ENCODE measurements at regions of chr3 and their contacts with region 1.

Region 1: GRCh38 chr3:119453818-119454217 is 9.6 kb downstream of the TMEM39A start:
- DNase-seq: no peak
- ATAC-seq: no peak
- H3K4me3 ChIP-seq: no peak overlapping the region
- H3K4me3 Mint-ChIP-seq: no peak overlapping the region
- H3K27ac ChIP-seq: no peak overlapping the region
- H3K27ac Mint-ChIP-seq: no peak overlapping the region
- H3K4me1 ChIP-seq: no peaks in the 10 kb centered on the region
- H3K4me1 Mint-ChIP-seq: peaks cover 22% of the 10 kb centered on the region
- H3K27me3 ChIP-seq: no peaks in the 10 kb centered on the region
- H3K27me3 Mint-ChIP-seq: no peaks in the 10 kb centered on the region
- CTCF ChIP-seq: no peak

Region 2: DNA sequence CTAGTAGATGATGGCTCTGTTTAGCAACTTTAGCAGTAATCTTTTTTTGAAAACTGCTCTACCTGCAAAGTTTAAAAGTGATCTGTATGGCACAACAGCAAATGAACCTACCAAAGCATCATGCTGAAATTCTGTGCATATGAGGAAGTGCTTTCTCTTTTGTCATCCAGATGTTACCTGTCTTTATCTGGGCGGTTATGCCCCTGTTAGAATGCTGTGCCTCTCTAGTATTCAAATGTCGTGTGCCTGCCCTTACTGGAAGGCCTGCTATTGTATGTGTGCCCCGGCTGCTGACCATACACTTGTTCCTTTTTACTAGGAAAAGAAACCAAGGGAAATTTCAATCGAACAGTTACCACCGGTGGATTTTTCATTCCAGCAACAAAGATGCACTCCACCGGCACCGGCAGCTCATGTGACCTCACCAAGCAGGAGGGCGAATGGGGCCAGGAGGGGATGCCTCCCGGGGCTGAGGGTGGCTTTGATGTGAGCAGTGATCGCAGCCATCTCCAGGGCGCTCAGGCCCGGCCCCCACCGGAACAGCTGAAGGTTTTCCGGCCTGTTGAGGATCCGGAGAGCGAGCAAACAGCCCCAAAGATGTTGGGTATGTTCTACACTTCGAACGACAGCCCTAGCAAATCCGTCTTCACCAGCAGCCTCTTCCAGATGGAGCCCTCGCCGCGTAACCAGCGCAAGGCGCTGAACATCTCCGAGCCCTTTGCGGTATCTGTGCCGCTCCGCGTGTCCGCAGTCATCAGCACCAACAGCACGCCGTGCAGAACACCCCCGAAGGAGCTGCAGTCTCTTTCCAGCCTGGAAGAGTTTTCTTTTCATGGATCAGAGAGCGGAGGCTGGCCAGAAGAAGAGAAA is 52.1 kb before region 1 on chr3:
- CTCF ChIA-PET with region 1: no interaction called
- POLR2A ChIA-PET with region 1: no interaction called
- intact Hi-C with region 1: no loop called
- DNase-seq: no peak
- ATAC-seq: no peak
- H3K4me3 ChIP-seq: no peak overlapping the region
- H3K4me3 Mint-ChIP-seq: no peak overlapping the region
- H3K27ac ChIP-seq: no peak overlapping the region
- H3K27ac Mint-ChIP-seq: no peak overlapping the region
- H3K4me1 ChIP-seq: no peaks in the 10 kb centered on the region
- H3K4me1 Mint-ChIP-seq: no peaks in the 10 kb centered on the region
- H3K27me3 ChIP-seq: no peaks in the 10 kb centered on the region
- H3K27me3 Mint-ChIP-seq: no peaks in the 10 kb centered on the region
- CTCF ChIP-seq: no peak

Region 3: GRCh38 chr3:119420196-119420595 is 33.6 kb before region 1 on chr3:
- CTCF ChIA-PET with region 1: no interaction called
- POLR2A ChIA-PET with region 1: no interaction called
- intact Hi-C with region 1: no loop called
- DNase-seq: peak in 1 of 9 experiments; percentile 17
- ATAC-seq: no peak
- H3K4me3 ChIP-seq: no peak overlapping the region
- H3K4me3 Mint-ChIP-seq: no peak overlapping the region
- H3K27ac ChIP-seq: no peak overlapping the region
- H3K27ac Mint-ChIP-seq: peak overlapping the region; percentile 12
- H3K4me1 ChIP-seq: no peaks in the 10 kb centered on the region
- H3K4me1 Mint-ChIP-seq: peaks cover 7% of the 10 kb centered on the region
- H3K27me3 ChIP-seq: no peaks in the 10 kb centered on the region
- H3K27me3 Mint-ChIP-seq: no peaks in the 10 kb centered on the region
- CTCF ChIP-seq: no peak

Region 4: DNA sequence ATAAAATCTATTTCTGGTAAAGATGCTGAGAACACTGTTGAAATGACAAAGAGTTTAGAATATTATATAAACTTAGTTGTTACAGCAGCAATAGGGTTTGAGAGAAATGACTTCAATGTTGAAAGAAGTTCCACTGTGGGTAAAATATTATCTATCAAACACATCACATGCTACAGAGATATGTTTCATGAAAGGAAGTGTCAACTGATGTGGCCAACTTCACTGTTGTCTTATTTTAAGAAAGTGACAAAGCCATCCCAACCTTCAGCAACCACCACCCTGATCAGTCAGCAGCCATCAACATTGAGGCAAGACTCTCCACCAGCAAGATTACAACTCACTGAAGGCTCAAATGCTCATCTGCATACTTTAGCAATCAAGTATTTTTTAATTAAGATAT is 10.6 kb before region 1 on chr3:
- CTCF ChIA-PET with region 1: no interaction called
- POLR2A ChIA-PET with region 1: no interaction called
- intact Hi-C with region 1: loop called in 1 of 2 experiments (anchors 1 kb)
- DNase-seq: no peak
- ATAC-seq: no peak
- H3K4me3 ChIP-seq: no peak overlapping the region
- H3K4me3 Mint-ChIP-seq: no peak overlapping the region
- H3K27ac ChIP-seq: no peak overlapping the region
- H3K27ac Mint-ChIP-seq: no peak overlapping the region
- H3K4me1 ChIP-seq: no peaks in the 10 kb centered on the region
- H3K4me1 Mint-ChIP-seq: peaks cover 5% of the 10 kb centered on the region
- H3K27me3 ChIP-seq: no peaks in the 10 kb centered on the region
- H3K27me3 Mint-ChIP-seq: no peaks in the 10 kb centered on the region
- CTCF ChIP-seq: no peak

Measured in CD8-positive, alpha-beta T cell (primary cell).